ENCODE measurements at regions of chr14 and their contacts with region 1.

Region 1: DNA sequence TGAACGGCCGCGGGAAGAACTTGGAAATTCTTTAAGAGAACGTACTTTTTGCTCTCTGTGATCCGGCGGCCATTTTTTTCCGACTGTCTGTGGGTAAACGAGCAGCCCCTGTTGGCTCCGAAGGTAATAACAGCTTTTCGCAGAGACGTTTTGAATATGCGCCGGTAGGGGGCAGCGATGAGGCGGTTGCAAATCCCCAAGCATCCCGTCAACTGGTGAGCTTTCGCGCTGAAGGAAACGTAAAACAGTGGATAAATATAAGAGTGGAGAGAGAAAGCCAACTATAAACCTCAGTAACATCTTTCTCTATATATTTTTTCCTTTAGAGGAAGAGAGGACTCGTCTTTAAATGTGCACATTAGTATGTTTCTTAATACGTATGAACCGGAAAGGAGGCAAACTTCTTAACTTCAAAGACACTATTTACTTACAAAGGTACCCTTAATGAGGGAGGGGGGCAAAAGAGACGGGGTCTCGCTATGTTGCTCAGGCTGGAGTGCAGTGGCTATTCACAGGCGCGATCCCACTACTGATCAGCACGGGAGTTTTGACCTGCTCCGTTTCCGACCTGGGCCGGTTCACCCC is 9.6 kb upstream of the NEMF start:
- DNase-seq: peak; percentile 72 to 84 (median 84)
- H3K4me3 ChIP-seq: peak overlapping the region; percentile 88 to 99 (median 97)
- H3K4me3 Mint-ChIP-seq: peak overlapping the region in 1 of 2 donors; percentile 98
- H3K27ac ChIP-seq: peak overlapping the region; percentile 90 to 91
- H3K27ac Mint-ChIP-seq: no peak overlapping the region
- H3K4me1 ChIP-seq: peaks cover 42 to 52% of the 10 kb centered on the region in 2 donors
- H3K4me1 Mint-ChIP-seq: peaks cover 20% of the 10 kb centered on the region
- H3K27me3 ChIP-seq: no peaks in the 10 kb centered on the region
- H3K27me3 Mint-ChIP-seq: peaks cover 0 to 5% (median 0%) of the 10 kb centered on the region in 3 donors
- CTCF ChIP-seq: peak; percentile 100

Region 2: GRCh38 chr14:49808780-49809179 is 53.4 kb before region 1 on chr14:
- intact Hi-C with region 1: no loop called
- DNase-seq: no peak
- H3K4me3 ChIP-seq: no peak overlapping the region
- H3K4me3 Mint-ChIP-seq: no peak overlapping the region
- H3K27ac ChIP-seq: no peak overlapping the region
- H3K27ac Mint-ChIP-seq: no peak overlapping the region
- H3K4me1 ChIP-seq: no peaks in the 10 kb centered on the region
- H3K4me1 Mint-ChIP-seq: no peaks in the 10 kb centered on the region
- H3K27me3 ChIP-seq: no peaks in the 10 kb centered on the region
- H3K27me3 Mint-ChIP-seq: peaks cover 0 to 2% (median 0%) of the 10 kb centered on the region in 3 donors
- CTCF ChIP-seq: no peak

Region 3: DNA sequence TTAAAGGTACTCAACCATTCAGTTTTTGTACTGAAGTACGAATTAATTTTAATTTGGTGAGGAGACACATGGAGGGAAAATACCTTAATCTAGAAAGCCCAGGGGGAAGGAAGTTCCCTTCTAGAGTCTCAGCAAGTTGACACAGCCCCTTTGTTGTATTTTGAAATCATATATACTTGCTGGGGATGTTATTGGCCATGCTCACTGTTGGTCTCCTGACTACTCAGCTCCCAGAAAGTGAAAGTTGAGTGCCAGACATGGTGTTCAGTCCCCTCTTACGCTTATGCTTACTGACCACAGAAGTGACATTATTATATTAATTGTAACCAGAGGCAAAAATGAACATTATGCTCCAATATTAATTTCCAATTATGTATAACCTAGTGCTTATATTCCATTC is 58.8 kb after region 1 on chr14:
- intact Hi-C with region 1: no loop called
- DNase-seq: peak; percentile 55 to 62 (median 57)
- H3K4me3 ChIP-seq: peak overlapping the region in 1 of 3 experiments; percentile 1
- H3K4me3 Mint-ChIP-seq: no peak overlapping the region
- H3K27ac ChIP-seq: peak overlapping the region in 1 of 2 donors; percentile 37
- H3K27ac Mint-ChIP-seq: peak overlapping the region in 5 of 7 donors; percentile 19 to 70 (median 26)
- H3K4me1 ChIP-seq: peaks cover 7 to 22% of the 10 kb centered on the region in 2 donors
- H3K4me1 Mint-ChIP-seq: peaks cover 21% of the 10 kb centered on the region
- H3K27me3 ChIP-seq: no peaks in the 10 kb centered on the region
- H3K27me3 Mint-ChIP-seq: peaks cover 0 to 2% (median 0%) of the 10 kb centered on the region in 3 donors
- CTCF ChIP-seq: no peak

Region 4: GRCh38 chr14:50109342-50109741 is 247.2 kb after region 1 on chr14:
- intact Hi-C with region 1: loop called in 1 of 2 experiments (anchors 5 kb)
- DNase-seq: no peak
- H3K4me3 ChIP-seq: no peak overlapping the region
- H3K4me3 Mint-ChIP-seq: no peak overlapping the region
- H3K27ac ChIP-seq: no peak overlapping the region
- H3K27ac Mint-ChIP-seq: no peak overlapping the region
- H3K4me1 ChIP-seq: no peaks in the 10 kb centered on the region
- H3K4me1 Mint-ChIP-seq: no peaks in the 10 kb centered on the region
- H3K27me3 ChIP-seq: no peaks in the 10 kb centered on the region
- H3K27me3 Mint-ChIP-seq: no peaks in the 10 kb centered on the region
- CTCF ChIP-seq: no peak

Region 5: GRCh38 chr14:50116181-50116956 is 254.2 kb after region 1 on chr14 and contains the start of gene VCPKMT:
- intact Hi-C with region 1: loop called in 1 of 2 experiments (anchors 5 kb)
- DNase-seq: peak; percentile 88 to 90 (median 89)
- H3K4me3 ChIP-seq: peak within 1 kb of the TSS; percentile 75 to 84 (median 82)
- H3K4me3 Mint-ChIP-seq: peak within 1 kb of the TSS; percentile 89 to 95
- H3K27ac ChIP-seq: peak within 1 kb of the TSS; percentile 80 to 96
- H3K27ac Mint-ChIP-seq: peak within 1 kb of the TSS; percentile 94 to 99 (median 97)
- H3K4me1 ChIP-seq: peaks cover 12 to 15% of the 10 kb centered on the region in 2 donors
- H3K4me1 Mint-ChIP-seq: peaks cover 6% of the 10 kb centered on the region
- H3K27me3 ChIP-seq: no peaks in the 10 kb centered on the region
- H3K27me3 Mint-ChIP-seq: no peaks in the 10 kb centered on the region
- CTCF ChIP-seq: no peak
- polyA plus RNA-seq, gene VCPKMT: 3.4 to 14.2 (median 3.5) TPM

Measured in CD14-positive monocyte (primary cell).